ENCODE measurements at regions of chr14 and their contacts with region 1.

Region 1: DNA sequence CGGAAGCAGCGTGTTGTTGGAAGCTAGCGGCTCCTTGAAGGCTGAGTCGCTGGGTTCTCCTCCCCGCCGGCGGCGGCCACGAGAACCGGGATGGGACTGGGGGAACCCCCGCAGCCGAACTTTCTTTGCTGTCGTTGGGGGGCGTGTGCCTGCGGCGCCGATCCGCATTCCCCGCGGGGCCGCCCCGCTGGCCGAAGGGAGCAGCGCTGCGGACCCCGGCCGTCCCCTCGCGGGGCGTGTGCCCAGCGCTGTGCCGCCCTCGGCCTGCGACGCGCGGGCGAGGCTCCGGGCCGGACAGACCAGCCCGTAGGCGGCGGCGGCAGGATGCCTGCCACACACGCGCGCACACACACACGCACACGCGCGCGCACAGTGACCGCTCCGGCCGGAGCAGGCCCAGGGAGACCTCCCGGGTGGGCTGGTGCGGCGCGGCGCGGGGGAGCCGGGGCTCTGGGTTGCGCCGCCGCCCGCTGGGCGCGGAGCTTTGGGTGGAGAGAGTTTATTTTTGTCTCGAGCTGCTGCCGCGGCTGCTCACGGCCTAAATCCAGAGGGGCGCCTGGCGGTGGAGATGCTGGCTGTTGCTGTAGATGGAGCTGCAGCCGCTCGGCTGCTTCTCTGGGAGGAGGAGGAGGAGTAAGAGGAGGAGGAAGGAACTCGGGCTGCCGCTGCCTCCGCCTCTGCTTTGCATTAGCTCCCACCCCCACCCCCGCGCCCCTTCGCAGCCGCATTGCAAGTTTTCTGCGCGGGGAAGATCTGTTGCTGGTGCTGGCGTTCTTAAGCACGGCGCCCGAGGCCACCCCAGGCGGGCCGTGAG is at the start of gene SAMD4A:
- DNase-seq: peak; percentile 19 to 72 (median 57)
- ATAC-seq: peak; percentile 36
- H3K4me3 ChIP-seq: peak within 1 kb of the TSS; percentile 67 to 84
- H3K4me3 Mint-ChIP-seq: peak within 1 kb of the TSS; percentile 93
- H3K27ac ChIP-seq: peak within 1 kb of the TSS in 1 of 2 experiments; percentile 12
- H3K27ac Mint-ChIP-seq: peak within 1 kb of the TSS; percentile 83
- H3K4me1 ChIP-seq: peaks cover 15% of the 10 kb centered on the region
- H3K4me1 Mint-ChIP-seq: peaks cover 21% of the 10 kb centered on the region
- H3K27me3 ChIP-seq: peaks cover 0 to 3% of the 10 kb centered on the region in 2 experiments
- H3K27me3 Mint-ChIP-seq: peaks cover 15% of the 10 kb centered on the region
- CTCF ChIP-seq: no peak
- total RNA-seq, gene SAMD4A: 1.6 to 2.0 TPM

Region 2: DNA sequence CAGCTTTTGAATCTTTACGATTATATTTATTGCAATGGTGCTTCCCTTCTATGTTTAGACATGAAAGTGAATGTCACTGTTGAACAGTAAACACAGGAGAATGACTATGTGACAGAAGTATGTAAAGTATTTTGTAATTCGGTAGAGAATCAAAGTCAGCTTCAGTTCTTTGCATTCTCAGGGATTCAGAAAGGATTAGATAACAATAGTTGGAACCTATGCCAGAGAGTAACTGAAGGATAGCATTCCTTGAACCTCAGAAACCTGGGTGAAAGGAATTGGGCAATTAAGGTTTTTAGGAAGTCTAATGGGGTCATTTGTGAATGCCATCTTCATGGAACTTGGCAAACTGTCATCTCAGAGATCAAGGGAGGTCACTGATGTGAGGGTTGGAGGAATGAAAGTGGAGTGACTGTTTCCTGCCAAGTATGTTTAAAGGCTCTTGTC is 1108.2 kb before region 1 on chr14:
- CTCF ChIA-PET with region 1: no interaction called
- POLR2A ChIA-PET with region 1: no interaction called
- intact Hi-C with region 1: no loop called
- DNase-seq: no peak
- ATAC-seq: no peak
- H3K4me3 ChIP-seq: no peak overlapping the region
- H3K4me3 Mint-ChIP-seq: no peak overlapping the region
- H3K27ac ChIP-seq: no peak overlapping the region
- H3K27ac Mint-ChIP-seq: no peak overlapping the region
- H3K4me1 ChIP-seq: no peaks in the 10 kb centered on the region
- H3K4me1 Mint-ChIP-seq: no peaks in the 10 kb centered on the region
- H3K27me3 ChIP-seq: no peaks in the 10 kb centered on the region
- H3K27me3 Mint-ChIP-seq: no peaks in the 10 kb centered on the region
- CTCF ChIP-seq: no peak

Region 3: DNA sequence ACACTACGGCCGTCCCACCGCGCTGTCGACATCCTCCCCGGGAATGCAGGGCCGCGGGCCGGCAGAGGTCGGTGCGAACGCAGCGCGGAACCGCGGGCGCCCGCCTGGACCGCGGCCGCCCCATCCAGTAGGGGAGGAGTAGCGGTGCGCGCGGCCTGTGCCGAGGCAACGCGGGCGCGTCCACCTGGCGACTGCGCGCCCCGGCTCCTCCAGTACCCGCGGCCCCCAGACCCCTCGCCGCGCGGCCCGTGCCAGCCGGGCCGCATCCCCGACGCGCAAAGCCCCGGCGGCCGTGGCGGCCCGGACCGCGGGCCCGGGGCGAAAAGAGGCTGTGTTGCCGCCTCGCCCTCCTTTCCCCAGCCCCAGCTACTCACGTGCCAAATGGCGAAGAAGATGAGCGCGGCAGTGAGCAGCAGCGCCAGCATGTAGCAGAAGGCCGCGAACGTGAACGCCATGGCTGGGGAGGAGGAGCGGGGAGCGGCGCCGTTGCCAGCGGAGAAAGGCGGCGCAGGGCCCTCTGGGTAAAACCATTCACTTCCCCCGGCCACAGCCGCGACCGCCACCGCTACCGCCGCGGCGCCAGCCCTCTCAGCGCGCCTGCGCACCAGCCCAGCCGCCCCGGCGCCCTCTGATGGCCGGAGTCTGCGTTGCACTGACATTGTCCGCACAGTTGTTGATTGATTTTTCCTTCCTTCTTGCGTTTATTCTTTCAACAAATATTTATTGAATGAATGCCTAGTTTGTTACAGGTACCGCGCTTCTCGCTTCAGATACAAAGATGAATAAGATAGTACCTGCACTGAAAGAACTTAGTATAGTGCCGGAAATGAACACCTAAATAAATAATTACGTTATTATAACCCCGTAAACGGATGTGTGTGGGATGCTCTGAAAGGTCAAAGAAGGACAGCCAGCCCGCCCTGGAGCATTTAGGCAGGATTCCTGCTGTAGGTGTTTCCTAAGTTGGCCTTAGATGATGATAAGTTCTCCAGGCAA is 125.4 kb before region 1 on chr14 and contains the start of gene CNIH1:
- CTCF ChIA-PET with region 1: no interaction called
- POLR2A ChIA-PET with region 1: no interaction called
- intact Hi-C with region 1: loop called (anchors 1 kb)
- DNase-seq: peak; percentile 88 to 98 (median 93)
- ATAC-seq: peak; percentile 92
- H3K4me3 ChIP-seq: peak within 1 kb of the TSS; percentile 45 to 66
- H3K4me3 Mint-ChIP-seq: peak within 1 kb of the TSS; percentile 93
- H3K27ac ChIP-seq: peak within 1 kb of the TSS; percentile 76 to 81
- H3K27ac Mint-ChIP-seq: peak within 1 kb of the TSS; percentile 96
- H3K4me1 ChIP-seq: peaks cover 18% of the 10 kb centered on the region
- H3K4me1 Mint-ChIP-seq: peaks cover 41% of the 10 kb centered on the region
- H3K27me3 ChIP-seq: no peaks in the 10 kb centered on the region
- H3K27me3 Mint-ChIP-seq: no peaks in the 10 kb centered on the region
- CTCF ChIP-seq: peak; percentile 99
- total RNA-seq, gene CNIH1: 49.2 to 55.6 TPM

Region 4: GRCh38 chr14:54627540-54628363 is 61.1 kb after region 1 on chr14:
- CTCF ChIA-PET with region 1: interaction called, 3 read pairs
- POLR2A ChIA-PET with region 1: no interaction called
- intact Hi-C with region 1: loop called in 1 of 2 experiments (anchors 5 kb)
- DNase-seq: peak in 4 of 9 experiments; percentile 11 to 70 (median 42)
- ATAC-seq: peak; percentile 66
- H3K4me3 ChIP-seq: peak overlapping the region; percentile 27 to 38
- H3K4me3 Mint-ChIP-seq: peak overlapping the region; percentile 74
- H3K27ac ChIP-seq: peak overlapping the region; percentile 56 to 86
- H3K27ac Mint-ChIP-seq: peak overlapping the region; percentile 74
- H3K4me1 ChIP-seq: peaks cover 38% of the 10 kb centered on the region
- H3K4me1 Mint-ChIP-seq: peaks cover 40% of the 10 kb centered on the region
- H3K27me3 ChIP-seq: no peaks in the 10 kb centered on the region
- H3K27me3 Mint-ChIP-seq: no peaks in the 10 kb centered on the region
- CTCF ChIP-seq: no peak

Region 5: DNA sequence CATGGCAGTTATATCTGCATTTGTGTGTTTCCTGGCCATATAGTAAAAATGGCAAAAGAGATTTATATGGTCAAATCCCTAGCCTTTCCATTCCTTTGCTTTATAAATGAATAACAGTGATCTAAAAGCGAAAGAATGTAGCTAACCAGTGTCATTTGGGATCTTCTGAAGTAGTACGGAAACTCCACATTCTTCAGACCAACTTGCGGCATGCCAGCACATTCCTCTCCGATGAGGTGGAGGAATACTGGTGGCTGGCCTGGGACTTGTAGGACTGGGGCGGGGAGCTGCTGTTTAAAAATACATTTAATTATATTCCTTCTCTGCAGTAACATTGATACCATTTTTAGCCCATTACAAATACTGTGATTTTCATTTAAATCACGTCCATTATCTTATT is 85.6 kb after region 1 on chr14:
- CTCF ChIA-PET with region 1: no interaction called
- POLR2A ChIA-PET with region 1: no interaction called
- intact Hi-C with region 1: no loop called
- DNase-seq: no peak
- ATAC-seq: no peak
- H3K4me3 ChIP-seq: no peak overlapping the region
- H3K4me3 Mint-ChIP-seq: no peak overlapping the region
- H3K27ac ChIP-seq: no peak overlapping the region
- H3K27ac Mint-ChIP-seq: no peak overlapping the region
- H3K4me1 ChIP-seq: no peaks in the 10 kb centered on the region
- H3K4me1 Mint-ChIP-seq: no peaks in the 10 kb centered on the region
- H3K27me3 ChIP-seq: peaks cover 0 to 2% of the 10 kb centered on the region in 2 experiments
- H3K27me3 Mint-ChIP-seq: peaks cover 29% of the 10 kb centered on the region
- CTCF ChIP-seq: no peak

Region 6: GRCh38 chr14:54722781-54723432 is 156.3 kb after region 1 on chr14:
- CTCF ChIA-PET with region 1: interaction called, 15 read pairs
- POLR2A ChIA-PET with region 1: no interaction called
- intact Hi-C with region 1: loop called in 1 of 2 experiments (anchors 2 kb)
- DNase-seq: peak in 2 of 9 experiments; percentile 10 to 48
- ATAC-seq: peak; percentile 51
- H3K4me3 ChIP-seq: no peak overlapping the region
- H3K4me3 Mint-ChIP-seq: no peak overlapping the region
- H3K27ac ChIP-seq: no peak overlapping the region
- H3K27ac Mint-ChIP-seq: no peak overlapping the region
- H3K4me1 ChIP-seq: no peaks in the 10 kb centered on the region
- H3K4me1 Mint-ChIP-seq: peaks cover 3% of the 10 kb centered on the region
- H3K27me3 ChIP-seq: peaks cover 0 to 7% of the 10 kb centered on the region in 2 experiments
- H3K27me3 Mint-ChIP-seq: peaks cover 12% of the 10 kb centered on the region
- CTCF ChIP-seq: no peak

Region 7: GRCh38 chr14:54902521-54903420 is 336.2 kb after region 1 on chr14 and contains the start of gene GCH1:
- CTCF ChIA-PET with region 1: interaction called, 5 read pairs
- POLR2A ChIA-PET with region 1: interaction called, 3 read pairs
- intact Hi-C with region 1: loop called (anchors 1 to 5 kb)
- DNase-seq: peak; percentile 51 to 91 (median 73)
- ATAC-seq: peak; percentile 73
- H3K4me3 ChIP-seq: peak within 1 kb of the TSS; percentile 95 to 98
- H3K4me3 Mint-ChIP-seq: peak within 1 kb of the TSS; percentile 92
- H3K27ac ChIP-seq: peak within 1 kb of the TSS; percentile 79 to 89
- H3K27ac Mint-ChIP-seq: peak within 1 kb of the TSS; percentile 91
- H3K4me1 ChIP-seq: peaks cover 11% of the 10 kb centered on the region
- H3K4me1 Mint-ChIP-seq: peaks cover 27% of the 10 kb centered on the region
- H3K27me3 ChIP-seq: no peaks in the 10 kb centered on the region
- H3K27me3 Mint-ChIP-seq: no peaks in the 10 kb centered on the region
- CTCF ChIP-seq: peak; percentile 61
- total RNA-seq, gene GCH1: 30.0 to 30.5 TPM

Region 8: GRCh38 chr14:55051426-55052268 is 485.0 kb after region 1 on chr14 and contains the start of gene MAPK1IP1L:
- CTCF ChIA-PET with region 1: no interaction called
- POLR2A ChIA-PET with region 1: no interaction called
- intact Hi-C with region 1: loop called in 1 of 2 experiments (anchors 10 kb)
- DNase-seq: peak; percentile 83 to 94 (median 89)
- ATAC-seq: peak; percentile 94
- H3K4me3 ChIP-seq: peak within 1 kb of the TSS; percentile 99 to 100
- H3K4me3 Mint-ChIP-seq: peak within 1 kb of the TSS; percentile 88
- H3K27ac ChIP-seq: peak within 1 kb of the TSS; percentile 100
- H3K27ac Mint-ChIP-seq: peak within 1 kb of the TSS; percentile 94
- H3K4me1 ChIP-seq: peaks cover 27% of the 10 kb centered on the region
- H3K4me1 Mint-ChIP-seq: peaks cover 47% of the 10 kb centered on the region
- H3K27me3 ChIP-seq: no peaks in the 10 kb centered on the region
- H3K27me3 Mint-ChIP-seq: no peaks in the 10 kb centered on the region
- CTCF ChIP-seq: peak; percentile 100
- total RNA-seq, gene MAPK1IP1L: 207 to 212 TPM

Measured in CD8-positive, alpha-beta T cell (primary cell).